ENCODE measurements at regions of chr9 and their contacts with region 1.

Region 1: GRCh38 chr9:83334320-83334719 is 203.9 kb downstream of the FRMD3 start:
- DNase-seq: peak; percentile 86
- ATAC-seq: peak; percentile 96

Region 2: DNA sequence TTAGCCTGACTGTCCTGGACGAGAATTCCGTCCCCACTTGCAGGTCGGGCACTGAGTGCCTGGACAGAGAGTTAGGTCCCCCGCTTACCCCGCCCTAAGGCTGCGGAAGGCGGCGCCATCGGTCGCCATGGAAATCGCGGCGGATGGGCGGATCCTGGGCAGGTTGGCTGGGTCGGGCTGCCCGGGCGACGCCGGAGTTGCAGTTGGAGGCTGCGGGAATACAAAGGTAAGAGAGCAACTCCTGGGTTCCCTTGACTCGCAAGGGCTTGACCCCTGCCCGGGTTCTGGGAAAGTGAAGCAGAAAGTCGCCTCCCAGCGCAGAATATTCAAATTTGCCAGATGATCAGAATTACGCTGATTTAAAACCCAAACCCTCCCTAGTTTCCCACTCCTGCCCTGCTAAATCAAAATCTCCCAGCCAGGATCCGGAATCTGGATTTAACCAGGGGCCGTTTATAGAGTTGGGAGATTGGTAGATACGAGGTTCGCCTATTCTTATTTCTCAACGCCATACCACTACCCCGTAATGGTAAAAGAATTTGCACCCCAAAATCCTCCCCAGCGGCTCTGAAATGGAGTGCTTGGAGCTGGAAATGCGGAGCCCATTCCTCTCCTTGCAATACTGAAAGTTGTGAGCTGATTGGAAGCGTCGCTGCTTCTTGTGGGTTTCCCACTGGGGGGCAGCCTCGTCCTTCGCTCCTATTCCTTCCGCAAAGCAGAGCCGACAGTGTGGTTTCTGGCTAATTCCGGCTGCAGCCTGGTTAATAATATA is 115.0 kb before region 1 on chr9:
- intact Hi-C with region 1: loop called (anchors 5 kb)
- DNase-seq: peak; percentile 86
- ATAC-seq: peak; percentile 98

Region 3: GRCh38 chr9:83544002-83544698 is 209.8 kb after region 1 on chr9:
- intact Hi-C with region 1: loop called (anchors 5 kb)
- DNase-seq: no peak
- ATAC-seq: peak; percentile 91

Region 4: GRCh38 chr9:83596896-83597504 is 262.7 kb after region 1 on chr9:
- intact Hi-C with region 1: loop called (anchors 5 kb)
- DNase-seq: no peak
- ATAC-seq: peak; percentile 63